Heart left ventricle (tissue), 16 donors: ENCODE measurements at regions of chr20 and their contacts with region 1.

Region 1: GRCh38 chr20:49699200-49699992 is 14.3 kb downstream of the B4GALT5 start:
- DNase-seq: no peak
- ATAC-seq: no peak
- H3K4me3 ChIP-seq: no peak overlapping the region
- H3K27ac ChIP-seq: no peak overlapping the region
- H3K4me1 ChIP-seq: peaks cover 5 to 86% (median 43%) of the 10 kb centered on the region in 12 donors
- H3K27me3 ChIP-seq: no peaks in the 10 kb centered on the region
- CTCF ChIP-seq: no peak
- POLR2A ChIP-seq: no peak

Region 2: DNA sequence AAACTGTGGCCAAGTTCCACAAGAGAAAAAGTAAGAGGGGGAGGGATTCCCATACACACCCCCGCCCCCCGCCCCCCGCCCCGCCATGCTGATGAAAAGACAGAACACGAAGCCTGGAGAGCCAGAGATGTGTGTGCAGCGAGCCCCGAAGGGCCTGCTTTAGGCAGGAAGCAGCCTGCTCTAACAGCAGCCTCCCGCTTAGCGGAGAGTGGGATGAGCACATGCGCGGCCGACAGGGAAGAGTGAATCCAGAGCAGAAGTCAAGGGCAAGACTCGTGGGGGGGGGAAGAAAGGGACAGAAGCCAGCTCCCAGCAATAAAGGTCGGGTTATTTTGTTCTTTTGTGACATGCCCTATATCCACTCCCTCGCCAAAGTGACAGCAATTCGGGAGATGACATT is 64.2 kb before region 1 on chr20:
- intact Hi-C with region 1: no loop called
- DNase-seq: peak; percentile 41 to 75 (median 64)
- ATAC-seq: peak; percentile 48 to 73 (median 60)
- H3K4me3 ChIP-seq: no peak overlapping the region
- H3K27ac ChIP-seq: peak overlapping the region in 10 of 12 donors; percentile 20 to 71 (median 46)
- H3K4me1 ChIP-seq: peaks cover 0 to 43% (median 4%) of the 10 kb centered on the region in 12 donors
- H3K27me3 ChIP-seq: no peaks in the 10 kb centered on the region
- CTCF ChIP-seq: no peak
- POLR2A ChIP-seq: no peak

Region 3: DNA sequence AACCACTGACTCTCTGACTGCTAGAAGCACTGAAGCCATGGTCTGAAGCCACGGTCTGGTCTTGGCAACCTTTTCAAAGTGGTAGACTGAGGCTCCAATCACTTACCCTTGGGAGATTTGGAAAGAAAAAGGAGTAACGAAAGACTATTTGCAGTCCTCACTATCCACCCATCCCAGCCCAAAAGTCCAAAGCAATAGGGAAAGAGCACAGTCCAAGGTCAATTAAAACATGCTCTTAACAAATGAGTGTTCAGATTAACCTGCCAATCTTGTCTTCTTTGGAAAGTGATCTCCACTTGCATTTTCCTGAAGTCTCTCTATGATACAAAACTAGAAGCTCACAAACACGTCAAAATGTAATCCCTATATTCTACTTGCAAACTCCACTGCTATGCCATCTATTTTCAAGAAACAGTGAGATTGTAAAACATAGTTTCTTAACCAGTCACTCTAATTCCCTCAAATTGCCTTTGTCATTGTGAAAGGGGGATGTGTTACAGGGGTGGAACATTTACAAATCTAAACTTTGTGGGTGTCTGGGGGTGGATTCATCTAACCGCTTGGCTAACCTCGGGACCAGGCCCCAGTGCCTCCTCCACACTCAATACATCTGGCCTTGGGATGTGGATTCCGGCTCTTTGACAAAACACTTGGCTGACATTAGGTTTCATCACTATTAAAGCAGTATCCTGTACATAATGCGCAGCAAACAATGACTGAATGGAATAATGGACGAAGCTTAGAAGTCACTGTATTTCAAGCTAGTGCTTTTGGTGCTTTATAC is 42.1 kb before region 1 on chr20:
- intact Hi-C with region 1: loop called in 1 of 10 experiments (anchors 5 kb)
- DNase-seq: no peak
- ATAC-seq: peak in 3 of 4 donors; percentile 32 to 61 (median 36)
- H3K4me3 ChIP-seq: no peak overlapping the region
- H3K27ac ChIP-seq: peak overlapping the region in 3 of 12 donors; percentile 3 to 52 (median 21)
- H3K4me1 ChIP-seq: peaks cover 0 to 64% (median 29%) of the 10 kb centered on the region in 12 donors
- H3K27me3 ChIP-seq: no peaks in the 10 kb centered on the region
- CTCF ChIP-seq: no peak
- POLR2A ChIP-seq: no peak

Region 4: DNA sequence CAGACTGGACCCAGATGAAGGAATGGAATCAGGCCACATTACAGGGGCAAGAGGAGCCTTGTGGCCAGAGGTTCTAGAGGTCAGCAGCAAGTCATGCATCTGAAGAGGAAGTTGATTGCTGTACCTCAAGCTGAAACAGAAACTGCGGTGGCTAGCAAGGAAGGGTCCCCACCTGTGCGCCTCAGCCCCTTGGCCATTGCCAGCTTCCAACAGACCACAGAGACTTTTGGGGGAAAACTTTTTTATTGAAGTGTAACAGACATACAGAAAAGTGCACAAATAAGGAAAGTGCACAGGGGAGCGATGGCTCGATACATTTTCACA is 86.4 kb after region 1 on chr20:
- intact Hi-C with region 1: no loop called
- DNase-seq: no peak
- ATAC-seq: peak in 1 of 4 donors; percentile 36
- H3K4me3 ChIP-seq: peak overlapping the region in 1 of 12 donors; percentile 22
- H3K27ac ChIP-seq: peak overlapping the region in 1 of 12 donors; percentile 56
- H3K4me1 ChIP-seq: peaks cover 0 to 36% (median 7%) of the 10 kb centered on the region in 12 donors
- H3K27me3 ChIP-seq: no peaks in the 10 kb centered on the region
- CTCF ChIP-seq: no peak
- POLR2A ChIP-seq: no peak